ENCODE measurements at regions of chr12 and their contacts with region 1.

Region 1: DNA sequence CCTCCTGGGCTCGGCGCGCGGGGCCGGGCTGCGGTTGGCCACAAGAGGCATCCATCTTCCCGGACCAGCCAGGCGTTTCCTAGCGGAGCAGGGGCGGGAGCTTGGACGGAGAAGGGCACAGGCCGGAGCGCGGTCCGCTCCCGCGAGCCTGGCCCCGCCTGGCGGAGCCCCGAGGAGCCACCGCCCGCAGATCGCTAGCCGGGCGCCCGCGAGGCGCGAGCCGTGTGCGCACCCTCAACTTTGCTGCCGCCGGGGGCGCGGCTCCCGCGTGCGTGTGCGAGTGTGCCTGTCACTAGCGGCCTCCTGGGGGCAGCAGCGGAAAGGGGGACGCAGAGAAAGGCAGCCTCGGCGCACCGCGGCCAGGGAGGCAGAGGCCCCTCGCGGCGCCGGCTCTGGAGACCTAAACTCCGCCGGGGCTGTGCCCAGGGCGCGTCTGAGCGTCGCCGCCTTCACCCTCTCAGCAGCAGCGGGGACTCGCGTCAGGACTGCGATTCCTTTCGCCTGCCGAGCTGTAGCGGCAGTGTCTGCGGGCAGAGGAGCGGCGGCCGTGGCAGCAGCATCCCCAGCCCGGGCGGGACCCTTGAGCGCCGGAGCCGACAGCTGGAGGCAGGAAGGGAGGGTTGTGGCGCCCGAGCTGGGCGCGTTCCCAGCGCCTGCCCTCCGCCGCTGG is 644 bp upstream of the SRGAP1 start:
- DNase-seq: peak; percentile 86
- ATAC-seq: peak; percentile 88
- H3K4me3 ChIP-seq: peak overlapping the region; percentile 77 to 97
- H3K27ac ChIP-seq: peak overlapping the region; percentile 80
- H3K4me1 ChIP-seq: peaks cover 7 to 25% of the 10 kb centered on the region in 2 experiments; a peak in 3 of 4 replicates
- H3K27me3 ChIP-seq: no peaks in the 10 kb centered on the region
- CTCF ChIP-seq: peak; percentile 72 to 96 (median 87)
- POLR2A ChIP-seq: no peak
- RAD21 ChIP-seq: peak; percentile 99

Region 2: DNA sequence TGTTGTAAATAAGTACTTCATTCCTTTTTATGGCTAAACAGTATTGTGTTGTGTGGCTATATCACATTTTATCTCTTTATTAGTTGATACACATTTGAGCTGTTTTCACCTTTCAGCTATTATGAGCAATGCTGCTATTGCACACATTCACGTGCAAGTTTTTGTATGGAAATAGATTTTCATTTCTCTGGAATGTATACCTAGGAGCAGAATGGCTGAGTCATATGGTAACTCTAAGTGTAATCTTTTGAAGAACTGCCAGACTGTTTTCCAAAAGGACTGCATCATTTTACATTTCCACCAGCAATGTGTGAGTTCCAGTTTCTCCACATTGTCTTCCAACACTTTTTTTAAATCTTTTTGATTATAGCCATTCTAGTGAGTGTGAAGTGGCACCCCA is 134.7 kb after region 1 on chr12:
- CTCF ChIA-PET with region 1: no interaction called
- POLR2A ChIA-PET with region 1: no interaction called
- RAD21 ChIA-PET with region 1: no interaction called
- intact Hi-C with region 1: loop called (anchors 10 kb)
- DNase-seq: peak; percentile 58
- ATAC-seq: peak; percentile 71
- H3K4me3 ChIP-seq: peak overlapping the region in 1 of 2 experiments; percentile 30; a peak in 2 of 4 replicates
- H3K27ac ChIP-seq: peak overlapping the region; percentile 46; the same call in 1 of the 2 replicates
- H3K4me1 ChIP-seq: peaks cover 6 to 72% of the 10 kb centered on the region in 2 experiments
- H3K27me3 ChIP-seq: no peaks in the 10 kb centered on the region
- CTCF ChIP-seq: no peak
- POLR2A ChIP-seq: no peak
- RAD21 ChIP-seq: peak; percentile 15; the same call in 1 of the 2 replicates

Region 3: DNA sequence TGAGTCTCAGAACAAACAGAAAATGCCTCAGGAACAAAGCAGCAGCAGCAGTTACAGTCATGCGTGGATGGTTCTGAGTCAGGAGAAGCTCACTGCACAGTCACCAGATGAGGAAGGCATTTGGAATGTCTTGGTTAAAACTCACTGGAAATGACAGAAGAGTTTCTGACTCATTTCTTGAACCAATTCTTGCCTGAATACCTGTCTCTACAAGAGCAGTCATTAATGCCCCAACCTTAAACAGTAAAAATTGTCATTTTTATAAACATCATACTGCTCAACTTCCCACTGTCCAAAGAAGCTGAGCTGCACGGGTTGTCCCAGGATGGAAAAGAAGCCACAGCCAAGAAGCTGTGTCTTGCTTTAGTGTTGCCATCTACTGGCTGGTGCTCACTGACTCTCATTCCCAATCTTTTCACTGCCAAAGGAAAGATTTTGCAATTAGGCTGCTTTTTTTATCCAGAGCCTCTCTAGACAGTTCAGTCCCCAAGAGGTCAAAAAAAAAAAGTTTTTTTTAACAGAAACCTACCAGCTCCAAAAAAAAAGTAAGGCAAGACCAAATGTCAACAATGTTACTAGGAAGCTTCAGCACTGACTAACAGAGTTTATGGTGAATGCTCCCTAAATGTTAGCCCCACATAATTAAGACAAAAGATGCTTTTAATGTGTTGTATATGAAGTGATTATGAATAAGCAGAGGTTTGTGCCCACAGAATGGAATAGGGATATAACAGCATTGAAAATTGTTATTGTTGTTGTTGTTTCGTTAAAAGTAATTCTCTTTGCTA is 337.8 kb after region 1 on chr12:
- CTCF ChIA-PET with region 1: interaction called, 11 read pairs
- POLR2A ChIA-PET with region 1: no interaction called
- RAD21 ChIA-PET with region 1: interaction called, 3 to 4 read pairs
- intact Hi-C with region 1: loop called (anchors 1 kb)
- DNase-seq: peak; percentile 92
- ATAC-seq: peak; percentile 94
- H3K4me3 ChIP-seq: peak overlapping the region in 1 of 2 experiments; percentile 36; a peak in 2 of 4 replicates
- H3K27ac ChIP-seq: peak overlapping the region; percentile 60; the same call in 1 of the 2 replicates
- H3K4me1 ChIP-seq: peaks cover 16 to 50% of the 10 kb centered on the region in 2 experiments
- H3K27me3 ChIP-seq: no peaks in the 10 kb centered on the region
- CTCF ChIP-seq: peak; percentile 59 to 70 (median 68); a peak in 5 of 6 replicates
- POLR2A ChIP-seq: no peak
- RAD21 ChIP-seq: peak; percentile 69

Region 4: GRCh38 chr12:64256166-64256800 is 412.4 kb after region 1 on chr12:
- CTCF ChIA-PET with region 1: interaction called, 23 read pairs
- POLR2A ChIA-PET with region 1: no interaction called
- RAD21 ChIA-PET with region 1: interaction called, 9 to 11 read pairs
- intact Hi-C with region 1: loop called (anchors 1 kb)
- DNase-seq: peak; percentile 33
- ATAC-seq: peak; percentile 47; the same call in 1 of the 2 replicates
- H3K4me3 ChIP-seq: no peak overlapping the region
- H3K27ac ChIP-seq: no peak overlapping the region
- H3K4me1 ChIP-seq: no peaks in the 10 kb centered on the region
- H3K27me3 ChIP-seq: no peaks in the 10 kb centered on the region
- CTCF ChIP-seq: peak; percentile 42 to 94 (median 84); a peak in 5 of 6 replicates
- POLR2A ChIP-seq: no peak
- RAD21 ChIP-seq: peak; percentile 97